ENCODE measurements at regions of chr17 and their contacts with region 1.

Region 1: GRCh38 chr17:49707608-49708514 is at the start of gene SLC35B1:
- DNase-seq: peak; percentile 99
- H3K4me3 ChIP-seq: peak within 1 kb of the TSS; percentile 91
- H3K27ac ChIP-seq: peak within 1 kb of the TSS; percentile 98
- H3K4me1 ChIP-seq: peaks cover 8% of the 10 kb centered on the region
- H3K27me3 ChIP-seq: no peaks in the 10 kb centered on the region
- CTCF ChIP-seq: peak; percentile 93
- total RNA-seq, gene SLC35B1: 104 and 106 TPM in 2 replicates

Region 2: DNA sequence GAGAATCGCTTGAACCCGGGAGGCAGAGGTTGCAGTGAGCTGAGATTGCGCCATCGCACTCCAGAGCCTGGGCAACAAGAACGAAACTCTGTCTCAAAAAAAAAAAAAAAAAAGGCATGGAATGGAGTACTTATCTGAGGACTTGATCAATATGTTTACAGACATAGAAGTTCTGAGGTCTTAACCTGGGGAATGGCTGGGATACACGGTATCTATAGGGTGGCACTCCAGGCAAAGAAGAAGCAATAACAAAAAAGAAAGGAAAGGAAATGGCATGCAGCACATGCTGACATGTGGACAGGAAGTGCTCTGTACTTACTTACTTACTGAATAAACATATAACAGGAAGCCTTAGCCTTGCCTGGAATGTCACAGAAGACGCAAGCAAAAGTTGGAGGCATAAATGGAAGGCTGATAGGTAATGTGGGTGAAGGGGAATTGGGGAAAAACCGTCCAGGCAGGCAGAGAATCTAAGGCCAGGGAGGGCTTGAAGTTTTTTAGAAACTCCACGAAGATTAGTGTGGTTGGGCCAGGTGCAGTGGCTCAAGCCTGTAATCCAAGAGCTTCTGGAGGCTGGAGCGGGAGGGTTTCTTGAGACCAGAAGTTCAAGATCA is 19.9 kb before region 1 on chr17:
- CTCF ChIA-PET with region 1: no interaction called
- POLR2A ChIA-PET with region 1: no interaction called
- intact Hi-C with region 1: no loop called
- DNase-seq: peak; percentile 56
- H3K4me3 ChIP-seq: no peak overlapping the region
- H3K27ac ChIP-seq: no peak overlapping the region
- H3K4me1 ChIP-seq: peaks cover 7% of the 10 kb centered on the region
- H3K27me3 ChIP-seq: no peaks in the 10 kb centered on the region
- CTCF ChIP-seq: no peak

Region 3: GRCh38 chr17:49763735-49764558 is 56.1 kb after region 1 on chr17 and contains the start of gene FAM117A:
- CTCF ChIA-PET with region 1: no interaction called
- POLR2A ChIA-PET with region 1: interaction called, 8 read pairs
- intact Hi-C with region 1: loop called (anchors 2 kb)
- DNase-seq: peak; percentile 100
- H3K4me3 ChIP-seq: peak within 1 kb of the TSS; percentile 69
- H3K27ac ChIP-seq: peak within 1 kb of the TSS; percentile 28
- H3K4me1 ChIP-seq: peaks cover 15% of the 10 kb centered on the region
- H3K27me3 ChIP-seq: peaks cover 9% of the 10 kb centered on the region
- CTCF ChIP-seq: no peak
- total RNA-seq, gene FAM117A: 10.1 and 10.8 TPM in 2 replicates

Region 4: DNA sequence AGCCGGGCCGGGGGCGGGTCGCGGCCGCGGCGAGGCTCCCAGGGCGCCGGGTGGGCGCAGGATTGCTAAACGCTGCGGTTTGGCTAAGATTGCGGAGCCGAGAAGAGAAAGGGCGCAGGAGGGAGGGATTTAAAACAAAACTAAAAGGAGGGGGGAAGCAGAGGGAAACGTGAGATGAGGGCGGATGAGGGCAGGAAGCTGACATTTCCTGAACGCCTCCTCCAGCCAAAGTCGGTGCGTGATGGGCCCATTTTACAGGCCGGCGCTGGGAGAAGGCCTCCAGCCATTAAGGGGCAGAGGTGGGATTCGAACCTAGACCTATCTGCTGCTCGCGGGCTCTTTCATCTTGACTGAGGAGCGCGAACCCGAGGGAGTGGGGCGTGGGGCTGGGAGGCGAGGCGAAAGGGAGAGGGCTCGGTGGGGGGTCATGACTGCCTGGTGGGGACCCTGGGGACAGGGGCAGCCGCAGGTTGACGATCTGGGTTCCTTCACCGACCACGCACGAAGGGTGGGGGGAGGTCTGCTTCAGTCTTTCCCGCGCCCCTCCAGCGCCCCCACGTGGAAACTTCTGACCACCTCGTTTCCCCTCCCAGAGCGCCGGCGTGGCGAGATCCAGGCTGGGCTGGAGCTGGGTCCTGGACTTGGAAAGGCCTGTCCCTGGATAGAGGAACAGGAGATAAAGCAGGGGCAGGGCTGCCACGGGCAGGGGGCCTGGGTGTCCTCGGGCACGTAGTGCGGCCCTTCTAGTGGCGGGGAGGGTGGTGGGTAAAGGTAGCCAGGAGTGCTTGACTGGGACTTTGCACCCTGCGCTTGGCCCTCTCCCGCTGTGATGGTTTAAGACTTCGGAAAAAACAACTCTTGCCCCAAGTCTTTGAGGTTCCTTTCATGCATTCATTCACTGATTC is 143.8 kb after region 1 on chr17:
- CTCF ChIA-PET with region 1: no interaction called
- POLR2A ChIA-PET with region 1: no interaction called
- intact Hi-C with region 1: loop called (anchors 5 kb)
- DNase-seq: peak; percentile 86
- H3K4me3 ChIP-seq: peak overlapping the region; percentile 53
- H3K27ac ChIP-seq: no peak overlapping the region
- H3K4me1 ChIP-seq: no peaks in the 10 kb centered on the region
- H3K27me3 ChIP-seq: no peaks in the 10 kb centered on the region
- CTCF ChIP-seq: peak; percentile 91

Measured in A673 (cell line).